CD8-positive, alpha-beta memory T cell (primary cell): ENCODE measurements at regions of chr2 and their contacts with region 1.

Region 1: GRCh38 chr2:98658816-98659490 is 50.6 kb downstream of the UNC50 start:
- DNase-seq: peak in 2 of 5 donors; percentile 27 to 38
- H3K4me3 ChIP-seq: peak overlapping the region; percentile 30
- H3K4me3 Mint-ChIP-seq: peak overlapping the region; percentile 85 to 98 (median 89)
- H3K27ac ChIP-seq: peak overlapping the region; percentile 35
- H3K27ac Mint-ChIP-seq: peak overlapping the region; percentile 96 to 100 (median 98)
- H3K4me1 ChIP-seq: peaks cover 97% of the 10 kb centered on the region
- H3K4me1 Mint-ChIP-seq: peaks cover 75 to 94% (median 92%) of the 10 kb centered on the region in 3 donors
- H3K27me3 ChIP-seq: no peaks in the 10 kb centered on the region
- H3K27me3 Mint-ChIP-seq: no peaks in the 10 kb centered on the region

Region 2: GRCh38 chr2:98577313-98577712 is 81.6 kb before region 1 on chr2:
- CTCF ChIA-PET with region 1: no interaction called
- POLR2A ChIA-PET with region 1: no interaction called
- DNase-seq: no peak
- H3K4me3 ChIP-seq: no peak overlapping the region
- H3K4me3 Mint-ChIP-seq: no peak overlapping the region
- H3K27ac ChIP-seq: no peak overlapping the region
- H3K27ac Mint-ChIP-seq: peak overlapping the region in 2 of 8 donors; percentile 23 to 58
- H3K4me1 ChIP-seq: no peaks in the 10 kb centered on the region
- H3K4me1 Mint-ChIP-seq: no peaks in the 10 kb centered on the region
- H3K27me3 ChIP-seq: no peaks in the 10 kb centered on the region
- H3K27me3 Mint-ChIP-seq: no peaks in the 10 kb centered on the region

Region 3: GRCh38 chr2:98731041-98731893 is 72.3 kb after region 1 on chr2 and contains the start of gene MGAT4A:
- CTCF ChIA-PET with region 1: interaction called, 25 read pairs
- POLR2A ChIA-PET with region 1: interaction called, 16 read pairs
- DNase-seq: peak; percentile 73 to 86 (median 81)
- H3K4me3 ChIP-seq: peak within 1 kb of the TSS; percentile 72
- H3K4me3 Mint-ChIP-seq: peak within 1 kb of the TSS; percentile 93 to 97 (median 95)
- H3K27ac ChIP-seq: peak within 1 kb of the TSS; percentile 81
- H3K27ac Mint-ChIP-seq: peak within 1 kb of the TSS; percentile 79 to 98 (median 95)
- H3K4me1 ChIP-seq: peaks cover 62% of the 10 kb centered on the region
- H3K4me1 Mint-ChIP-seq: peaks cover 64 to 76% (median 72%) of the 10 kb centered on the region in 3 donors
- H3K27me3 ChIP-seq: no peaks in the 10 kb centered on the region
- H3K27me3 Mint-ChIP-seq: no peaks in the 10 kb centered on the region
- total RNA-seq, gene MGAT4A: 65.2 to 66.8 TPM